ENCODE measurements at regions of chr10 and their contacts with region 1.

Region 1: GRCh38 chr10:111076191-111076681 is 593 bp upstream of the ADRA2A start:
- DNase-seq: peak; percentile 93
- H3K4me3 ChIP-seq: peak overlapping the region; percentile 48 to 70
- H3K27ac ChIP-seq: no peak overlapping the region
- H3K4me1 ChIP-seq: peaks cover 0 to 18% of the 10 kb centered on the region in 2 experiments; a peak in 1 of 4 replicates
- H3K27me3 ChIP-seq: peaks cover 42% of the 10 kb centered on the region
- CTCF ChIP-seq: peak; percentile 75
- EP300 ChIP-seq: no peak
- RAD21 ChIP-seq: peak; percentile 88

Region 2: GRCh38 chr10:110893559-110894179 is 182.6 kb before region 1 on chr10:
- CTCF ChIA-PET with region 1: no interaction called
- POLR2A ChIA-PET with region 1: no interaction called
- DNase-seq: peak; percentile 41
- H3K4me3 ChIP-seq: no peak overlapping the region
- H3K27ac ChIP-seq: no peak overlapping the region; a peak in 1 of 4 replicates
- H3K4me1 ChIP-seq: peaks cover 0 to 6% of the 10 kb centered on the region in 2 experiments; a peak in 1 of 4 replicates
- H3K27me3 ChIP-seq: no peaks in the 10 kb centered on the region
- CTCF ChIP-seq: peak; percentile 71
- EP300 ChIP-seq: no peak
- RAD21 ChIP-seq: peak; percentile 73

Region 3: GRCh38 chr10:110977662-110978061 is 98.6 kb before region 1 on chr10:
- CTCF ChIA-PET with region 1: no interaction called
- POLR2A ChIA-PET with region 1: no interaction called
- DNase-seq: no peak
- H3K4me3 ChIP-seq: no peak overlapping the region
- H3K27ac ChIP-seq: no peak overlapping the region
- H3K4me1 ChIP-seq: no peaks in the 10 kb centered on the region
- H3K27me3 ChIP-seq: no peaks in the 10 kb centered on the region
- CTCF ChIP-seq: no peak
- EP300 ChIP-seq: no peak
- RAD21 ChIP-seq: no peak

Region 4: GRCh38 chr10:110993024-110993693 is 83.1 kb before region 1 on chr10:
- CTCF ChIA-PET with region 1: no interaction called
- POLR2A ChIA-PET with region 1: no interaction called
- DNase-seq: no peak
- H3K4me3 ChIP-seq: no peak overlapping the region
- H3K27ac ChIP-seq: peak overlapping the region in 1 of 2 experiments; percentile 6; a peak in 1 of 4 replicates
- H3K4me1 ChIP-seq: peaks cover 0 to 14% of the 10 kb centered on the region in 2 experiments; a peak in 2 of 4 replicates
- H3K27me3 ChIP-seq: no peaks in the 10 kb centered on the region
- CTCF ChIP-seq: no peak
- EP300 ChIP-seq: no peak
- RAD21 ChIP-seq: no peak

Region 5: DNA sequence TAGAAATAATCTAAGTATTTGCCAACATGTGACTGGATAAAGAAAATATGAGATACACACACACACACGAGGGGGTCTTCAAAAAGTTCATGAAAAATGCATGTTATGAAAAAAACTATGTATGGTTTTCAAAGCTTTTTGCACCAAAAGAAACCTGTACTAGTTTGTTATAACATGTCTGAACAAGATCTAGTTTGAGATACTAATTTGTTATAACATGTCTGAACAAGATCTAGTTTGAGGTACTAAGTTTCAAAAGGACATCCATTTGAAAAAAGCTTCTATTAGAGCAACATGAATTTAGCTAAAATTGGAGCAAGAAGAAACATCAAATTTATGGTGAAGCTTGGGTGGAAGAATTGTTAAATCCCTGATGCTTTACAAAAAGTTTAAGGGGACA is 19.2 kb before region 1 on chr10:
- CTCF ChIA-PET with region 1: interaction called, 13 read pairs
- POLR2A ChIA-PET with region 1: no interaction called
- DNase-seq: no peak
- H3K4me3 ChIP-seq: no peak overlapping the region
- H3K27ac ChIP-seq: no peak overlapping the region
- H3K4me1 ChIP-seq: no peaks in the 10 kb centered on the region
- H3K27me3 ChIP-seq: no peaks in the 10 kb centered on the region
- CTCF ChIP-seq: no peak
- EP300 ChIP-seq: no peak
- RAD21 ChIP-seq: no peak

Region 6: DNA sequence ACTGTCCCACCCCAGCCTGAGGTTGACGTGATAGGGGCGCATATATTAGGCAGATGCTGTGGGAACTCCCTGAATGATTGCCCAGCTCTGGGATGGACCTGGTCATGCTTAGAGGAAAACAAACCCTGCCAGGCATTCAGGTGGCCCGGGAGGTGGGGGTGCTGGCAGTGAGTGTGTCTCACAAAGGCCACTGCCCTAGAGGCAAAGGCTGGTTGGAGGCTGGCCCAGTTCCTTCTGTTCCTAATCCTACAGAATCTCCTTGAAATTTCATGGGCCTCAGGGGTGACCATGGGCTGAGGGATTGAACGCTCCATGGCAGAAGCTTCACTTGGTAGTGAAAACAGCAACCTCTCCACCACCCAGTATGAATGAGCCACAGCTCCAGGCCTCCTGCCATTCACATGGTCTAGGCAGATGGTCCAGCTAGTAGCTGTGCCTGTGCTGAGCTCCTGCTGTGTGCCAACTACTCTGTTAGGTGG is 26.2 kb after region 1 on chr10:
- CTCF ChIA-PET with region 1: interaction called, 22 read pairs
- POLR2A ChIA-PET with region 1: no interaction called
- DNase-seq: no peak
- H3K4me3 ChIP-seq: no peak overlapping the region
- H3K27ac ChIP-seq: no peak overlapping the region
- H3K4me1 ChIP-seq: peaks cover 0 to 2% of the 10 kb centered on the region in 2 experiments; a peak in 1 of 4 replicates
- H3K27me3 ChIP-seq: no peaks in the 10 kb centered on the region
- CTCF ChIP-seq: no peak
- EP300 ChIP-seq: no peak
- RAD21 ChIP-seq: no peak

Region 7: GRCh38 chr10:111151595-111152307 is 75.5 kb after region 1 on chr10:
- CTCF ChIA-PET with region 1: no interaction called
- POLR2A ChIA-PET with region 1: no interaction called
- DNase-seq: no peak
- H3K4me3 ChIP-seq: no peak overlapping the region
- H3K27ac ChIP-seq: no peak overlapping the region
- H3K4me1 ChIP-seq: no peaks in the 10 kb centered on the region; a peak in 1 of 4 replicates
- H3K27me3 ChIP-seq: no peaks in the 10 kb centered on the region
- CTCF ChIP-seq: no peak
- EP300 ChIP-seq: no peak
- RAD21 ChIP-seq: no peak

Region 8: GRCh38 chr10:111207500-111207899 is 131.3 kb after region 1 on chr10:
- CTCF ChIA-PET with region 1: interaction called, 21 read pairs
- POLR2A ChIA-PET with region 1: no interaction called
- DNase-seq: peak; percentile 5
- H3K4me3 ChIP-seq: no peak overlapping the region
- H3K27ac ChIP-seq: no peak overlapping the region
- H3K4me1 ChIP-seq: peaks cover 0 to 6% of the 10 kb centered on the region in 2 experiments; a peak in 1 of 4 replicates
- H3K27me3 ChIP-seq: no peaks in the 10 kb centered on the region
- CTCF ChIP-seq: no peak
- EP300 ChIP-seq: no peak
- RAD21 ChIP-seq: peak; percentile 47

Region 9: DNA sequence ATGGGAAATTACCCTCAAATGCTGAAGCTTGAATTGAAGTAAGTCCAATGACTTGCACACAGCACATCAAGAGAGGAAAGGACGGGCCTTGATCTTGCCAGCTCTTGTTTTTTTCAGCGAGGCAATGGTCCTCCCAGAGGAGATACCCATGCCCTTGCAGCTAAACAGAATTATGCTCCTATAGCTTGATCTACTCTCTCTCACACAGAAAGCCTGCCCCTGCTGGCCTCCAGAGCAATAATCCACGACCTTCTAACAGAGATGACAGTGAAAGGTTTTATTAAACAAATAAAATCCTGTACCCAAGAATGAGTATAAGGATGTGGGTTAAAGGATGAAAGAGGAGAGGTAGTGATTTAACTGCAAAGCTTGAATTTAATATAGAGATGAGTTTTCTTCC is 268.6 kb after region 1 on chr10:
- CTCF ChIA-PET with region 1: interaction called, 14 read pairs
- POLR2A ChIA-PET with region 1: no interaction called
- DNase-seq: peak; percentile 6
- H3K4me3 ChIP-seq: no peak overlapping the region
- H3K27ac ChIP-seq: no peak overlapping the region
- H3K4me1 ChIP-seq: no peaks in the 10 kb centered on the region
- H3K27me3 ChIP-seq: no peaks in the 10 kb centered on the region
- CTCF ChIP-seq: no peak
- EP300 ChIP-seq: no peak
- RAD21 ChIP-seq: peak; percentile 34

Region 10: DNA sequence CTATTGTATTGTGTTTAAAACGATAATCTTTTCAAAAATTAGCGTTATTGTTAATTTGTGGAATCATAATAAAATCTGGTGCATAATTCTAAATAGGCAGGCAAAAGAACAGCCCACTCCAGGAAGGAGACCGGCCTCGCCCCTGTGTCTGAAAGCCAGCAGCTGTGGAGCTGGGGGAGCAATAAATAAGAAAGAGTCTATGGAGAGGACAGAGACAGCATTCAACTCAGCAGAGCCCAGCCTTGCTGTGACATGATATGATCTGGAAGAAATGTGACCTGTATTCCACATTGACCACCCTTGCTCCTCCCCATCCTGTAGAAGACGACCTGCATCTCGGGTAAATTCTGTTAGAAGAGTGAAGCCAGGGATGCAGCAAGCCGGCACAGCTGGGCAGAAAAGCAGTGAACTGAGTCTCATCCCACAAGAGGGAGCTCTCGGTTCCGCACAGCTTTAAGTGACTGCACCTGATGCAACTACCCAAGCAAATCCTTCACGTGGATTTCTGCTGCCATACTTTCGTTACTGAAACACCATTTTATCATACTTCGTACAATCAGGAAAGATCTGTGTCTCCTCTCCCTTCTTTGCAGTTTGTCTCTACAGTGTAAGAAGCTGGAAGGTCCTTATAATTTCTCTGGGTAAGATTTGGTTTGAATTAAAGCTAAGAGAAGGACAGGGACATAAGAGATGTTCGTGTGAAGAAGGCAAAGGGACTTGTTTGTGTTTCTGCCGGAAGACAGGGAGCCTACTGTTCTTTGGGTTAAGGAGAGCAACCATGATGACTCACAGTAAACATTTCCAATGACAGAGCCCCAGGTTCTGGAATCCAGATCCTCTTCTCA is 680.2 kb after region 1 on chr10:
- CTCF ChIA-PET with region 1: interaction called, 14 read pairs
- POLR2A ChIA-PET with region 1: no interaction called
- DNase-seq: peak; percentile 18
- H3K4me3 ChIP-seq: peak overlapping the region in 1 of 2 experiments; percentile 23; a peak in 1 of 4 replicates
- H3K27ac ChIP-seq: no peak overlapping the region
- H3K4me1 ChIP-seq: no peaks in the 10 kb centered on the region
- H3K27me3 ChIP-seq: no peaks in the 10 kb centered on the region
- CTCF ChIP-seq: no peak
- EP300 ChIP-seq: no peak
- RAD21 ChIP-seq: peak; percentile 70